Right ventricle myocardium inferior (tissue), 1 donor: ENCODE measurements at regions of chr3 and their contacts with region 1.

Region 1: GRCh38 chr3:148604270-148605085 is 93.2 kb upstream of the AGTR1 start:
- DNase-seq: no peak
- ATAC-seq: peak; percentile 35

Region 2: GRCh38 chr3:148615385-148615784 is 10.9 kb after region 1 on chr3:
- intact Hi-C with region 1: loop called (anchors 1 kb)
- DNase-seq: no peak
- ATAC-seq: no peak

Region 3: GRCh38 chr3:148975248-148975647 is 370.8 kb after region 1 on chr3:
- intact Hi-C with region 1: no loop called
- DNase-seq: no peak
- ATAC-seq: peak; percentile 96